ENCODE measurements at regions of chr16 and their contacts with region 1.

Region 1: DNA sequence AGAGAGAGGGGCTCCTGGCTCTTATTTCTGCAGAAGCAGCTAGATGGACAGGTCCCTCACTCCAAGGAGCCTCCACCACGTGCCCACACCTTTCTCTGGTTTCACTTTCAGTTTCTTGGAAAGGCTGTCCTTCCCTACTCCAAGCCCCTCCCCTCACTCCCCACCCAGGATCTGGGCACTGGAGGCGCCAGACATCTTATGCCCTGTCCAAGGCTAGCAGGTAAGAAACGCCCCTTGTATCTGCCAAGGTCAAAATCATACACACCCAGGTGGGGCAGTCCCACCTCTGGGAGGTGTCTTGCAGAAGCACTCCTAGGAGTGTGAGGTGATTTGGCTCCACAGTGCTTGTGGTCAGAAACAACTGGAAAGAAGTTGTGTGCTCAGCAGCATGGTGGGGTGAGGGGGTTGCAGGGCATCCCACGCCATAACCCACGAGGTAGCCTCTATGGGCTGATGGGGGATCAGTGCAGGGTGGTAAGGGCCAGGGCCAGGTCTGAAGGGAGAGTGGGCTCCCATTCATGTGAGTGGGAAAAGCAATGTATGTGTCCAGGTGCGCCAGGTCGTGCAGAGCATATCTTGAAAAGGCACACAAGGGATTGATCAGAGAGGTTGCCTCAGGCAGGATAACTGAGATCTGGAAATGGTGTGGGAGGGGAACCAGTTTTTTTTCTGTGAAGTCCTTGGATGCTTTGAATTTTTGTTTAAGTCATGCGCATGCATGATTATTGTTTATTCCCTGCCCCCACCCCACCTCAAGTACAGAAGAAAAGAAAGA is 31.8 kb upstream of the PRM1 start:
- DNase-seq: peak; percentile 31
- ATAC-seq: peak; percentile 22
- H3K4me3 Mint-ChIP-seq: no peak overlapping the region
- H3K27ac Mint-ChIP-seq: no peak overlapping the region
- H3K4me1 Mint-ChIP-seq: peaks cover 44% of the 10 kb centered on the region
- H3K27me3 Mint-ChIP-seq: no peaks in the 10 kb centered on the region
- CTCF ChIP-seq: no peak

Region 2: GRCh38 chr16:11297492-11298142 is 15.3 kb before region 1 on chr16:
- CTCF ChIA-PET with region 1: no interaction called
- POLR2A ChIA-PET with region 1: interaction called, 17 read pairs
- intact Hi-C with region 1: no loop called
- DNase-seq: peak; percentile 85
- ATAC-seq: peak; percentile 83
- H3K4me3 Mint-ChIP-seq: peak overlapping the region; percentile 24
- H3K27ac Mint-ChIP-seq: peak overlapping the region; percentile 69
- H3K4me1 Mint-ChIP-seq: peaks cover 44% of the 10 kb centered on the region
- H3K27me3 Mint-ChIP-seq: peaks cover 7% of the 10 kb centered on the region
- CTCF ChIP-seq: no peak

Measured in activated CD8-positive, alpha-beta T cell treated with anti-CD3 and anti-CD28 coated beads for 36 hours (primary cell).